ENCODE measurements at regions of chr3 and their contacts with region 1.

Region 1: GRCh38 chr3:153043729-153044328 is 118.2 kb upstream of the RAP2B start:
- DNase-seq: no peak
- ATAC-seq: no peak
- H3K4me3 ChIP-seq: no peak overlapping the region
- H3K4me3 Mint-ChIP-seq: no peak overlapping the region
- H3K27ac ChIP-seq: no peak overlapping the region
- H3K27ac Mint-ChIP-seq: no peak overlapping the region
- H3K4me1 ChIP-seq: no peaks in the 10 kb centered on the region
- H3K4me1 Mint-ChIP-seq: peaks cover 0 to 10% (median 2%) of the 10 kb centered on the region in 7 donors
- H3K27me3 ChIP-seq: no peaks in the 10 kb centered on the region
- H3K27me3 Mint-ChIP-seq: peaks cover 0 to 8% (median 0%) of the 10 kb centered on the region in 5 donors

Region 2: DNA sequence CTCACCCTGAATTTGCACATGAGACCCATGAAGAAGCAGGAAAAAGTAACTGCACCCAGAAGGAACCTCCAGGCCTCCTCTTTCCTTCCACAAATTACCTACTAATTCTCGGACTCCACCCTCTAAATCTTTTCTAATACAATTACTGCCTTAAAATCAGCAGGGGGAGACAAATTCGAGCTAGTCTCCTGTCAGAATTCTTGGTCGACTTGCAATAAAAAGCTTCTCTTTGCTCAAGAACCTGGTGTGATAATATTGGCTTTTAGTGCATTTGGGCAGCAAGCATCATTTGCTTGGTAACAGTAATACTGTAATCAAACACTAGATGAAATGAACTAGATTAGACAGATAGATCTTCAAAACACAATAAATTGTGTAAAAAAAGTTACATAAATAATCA is 400.1 kb after region 1 on chr3:
- CTCF ChIA-PET with region 1: no interaction called
- POLR2A ChIA-PET with region 1: no interaction called
- intact Hi-C with region 1: loop called (anchors 5 kb)
- DNase-seq: peak in 5 of 9 donors; percentile 8 to 24 (median 12)
- ATAC-seq: no peak
- H3K4me3 ChIP-seq: no peak overlapping the region
- H3K4me3 Mint-ChIP-seq: no peak overlapping the region
- H3K27ac ChIP-seq: no peak overlapping the region
- H3K27ac Mint-ChIP-seq: peak overlapping the region in 1 of 9 donors; percentile 22
- H3K4me1 ChIP-seq: no peaks in the 10 kb centered on the region
- H3K4me1 Mint-ChIP-seq: peaks cover 5 to 26% (median 16%) of the 10 kb centered on the region in 7 donors
- H3K27me3 ChIP-seq: no peaks in the 10 kb centered on the region
- H3K27me3 Mint-ChIP-seq: no peaks in the 10 kb centered on the region

Region 3: GRCh38 chr3:153595186-153595815 is 551.5 kb after region 1 on chr3:
- CTCF ChIA-PET with region 1: interaction called, 3 read pairs
- POLR2A ChIA-PET with region 1: no interaction called
- intact Hi-C with region 1: loop called (anchors 1 kb)
- DNase-seq: peak in 5 of 9 donors; percentile 1 to 25 (median 11)
- ATAC-seq: peak; percentile 45
- H3K4me3 ChIP-seq: no peak overlapping the region
- H3K4me3 Mint-ChIP-seq: no peak overlapping the region
- H3K27ac ChIP-seq: no peak overlapping the region
- H3K27ac Mint-ChIP-seq: no peak overlapping the region
- H3K4me1 ChIP-seq: no peaks in the 10 kb centered on the region
- H3K4me1 Mint-ChIP-seq: peaks cover 0 to 15% (median 6%) of the 10 kb centered on the region in 7 donors
- H3K27me3 ChIP-seq: no peaks in the 10 kb centered on the region
- H3K27me3 Mint-ChIP-seq: no peaks in the 10 kb centered on the region

Region 4: GRCh38 chr3:153768561-153769469 is 725.0 kb after region 1 on chr3:
- CTCF ChIA-PET with region 1: interaction called, 29 read pairs
- POLR2A ChIA-PET with region 1: interaction called, 3 read pairs
- intact Hi-C with region 1: loop called (anchors 1 kb)
- DNase-seq: peak; percentile 12 to 67 (median 59)
- ATAC-seq: peak; percentile 96
- H3K4me3 ChIP-seq: no peak overlapping the region
- H3K4me3 Mint-ChIP-seq: no peak overlapping the region
- H3K27ac ChIP-seq: no peak overlapping the region
- H3K27ac Mint-ChIP-seq: peak overlapping the region in 1 of 9 donors; percentile 74
- H3K4me1 ChIP-seq: no peaks in the 10 kb centered on the region
- H3K4me1 Mint-ChIP-seq: peaks cover 0 to 12% (median 0%) of the 10 kb centered on the region in 7 donors
- H3K27me3 ChIP-seq: no peaks in the 10 kb centered on the region
- H3K27me3 Mint-ChIP-seq: peaks cover 6 to 28% (median 11%) of the 10 kb centered on the region in 5 donors

Region 5: GRCh38 chr3:153970741-153971347 is 927.0 kb after region 1 on chr3:
- CTCF ChIA-PET with region 1: interaction called, 5 read pairs
- POLR2A ChIA-PET with region 1: no interaction called
- intact Hi-C with region 1: loop called in 1 of 2 experiments (anchors 1 kb)
- DNase-seq: no peak
- ATAC-seq: no peak
- H3K4me3 ChIP-seq: no peak overlapping the region
- H3K4me3 Mint-ChIP-seq: no peak overlapping the region
- H3K27ac ChIP-seq: no peak overlapping the region
- H3K27ac Mint-ChIP-seq: no peak overlapping the region
- H3K4me1 ChIP-seq: no peaks in the 10 kb centered on the region
- H3K4me1 Mint-ChIP-seq: no peaks in the 10 kb centered on the region
- H3K27me3 ChIP-seq: peaks cover 0 to 3% of the 10 kb centered on the region in 2 donors
- H3K27me3 Mint-ChIP-seq: peaks cover 3 to 32% (median 23%) of the 10 kb centered on the region in 5 donors

Region 6: DNA sequence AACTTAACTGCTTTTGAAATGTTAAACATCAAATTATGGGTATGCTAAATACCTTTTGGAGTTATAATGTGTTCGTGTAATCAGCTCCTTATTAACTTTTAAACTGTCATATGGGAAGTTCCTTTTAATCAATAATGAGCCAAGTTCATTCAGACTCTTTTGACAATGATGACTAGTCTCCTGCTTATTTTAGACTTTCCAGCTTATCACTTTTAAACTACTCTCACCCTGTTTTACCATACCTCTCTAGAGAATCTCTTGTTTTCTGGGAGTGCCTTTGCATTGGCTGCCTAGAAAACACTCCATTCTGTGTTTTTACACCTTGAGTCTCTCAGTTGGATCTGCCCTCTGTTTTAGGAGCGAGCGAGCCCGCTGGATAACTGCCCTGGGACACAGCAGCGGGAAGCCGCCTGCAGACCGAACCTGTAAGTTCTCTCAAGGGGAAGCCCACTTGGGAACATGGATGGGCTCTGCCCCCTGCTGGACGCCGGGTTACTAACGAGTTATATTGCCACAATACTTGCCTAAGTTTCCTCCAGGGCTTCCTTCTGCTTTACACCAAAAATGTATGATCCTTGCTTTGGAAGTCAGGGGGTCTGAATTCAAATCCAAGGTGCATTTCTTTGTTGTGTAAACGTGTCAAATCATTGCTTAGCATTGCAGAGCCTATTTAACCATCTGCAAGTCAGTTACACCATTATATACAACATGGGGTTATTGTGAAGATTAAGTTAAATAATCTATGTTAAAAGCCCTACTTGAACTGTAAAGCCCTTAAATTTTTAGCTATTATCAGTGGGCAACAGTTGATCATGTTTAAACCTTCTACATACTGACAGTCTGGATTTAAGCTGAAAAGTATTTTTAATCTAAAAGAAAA is 1209.2 kb after region 1 on chr3:
- CTCF ChIA-PET with region 1: no interaction called
- POLR2A ChIA-PET with region 1: no interaction called
- intact Hi-C with region 1: loop called (anchors 1 to 5 kb)
- DNase-seq: peak; percentile 16 to 67 (median 49)
- ATAC-seq: peak; percentile 84
- H3K4me3 ChIP-seq: no peak overlapping the region
- H3K4me3 Mint-ChIP-seq: no peak overlapping the region
- H3K27ac ChIP-seq: no peak overlapping the region
- H3K27ac Mint-ChIP-seq: peak overlapping the region in 1 of 9 donors; percentile 48
- H3K4me1 ChIP-seq: no peaks in the 10 kb centered on the region
- H3K4me1 Mint-ChIP-seq: peaks cover 0 to 5% (median 0%) of the 10 kb centered on the region in 7 donors
- H3K27me3 ChIP-seq: no peaks in the 10 kb centered on the region
- H3K27me3 Mint-ChIP-seq: no peaks in the 10 kb centered on the region